ENCODE measurements at regions of chr2 and their contacts with region 1.

Region 1: DNA sequence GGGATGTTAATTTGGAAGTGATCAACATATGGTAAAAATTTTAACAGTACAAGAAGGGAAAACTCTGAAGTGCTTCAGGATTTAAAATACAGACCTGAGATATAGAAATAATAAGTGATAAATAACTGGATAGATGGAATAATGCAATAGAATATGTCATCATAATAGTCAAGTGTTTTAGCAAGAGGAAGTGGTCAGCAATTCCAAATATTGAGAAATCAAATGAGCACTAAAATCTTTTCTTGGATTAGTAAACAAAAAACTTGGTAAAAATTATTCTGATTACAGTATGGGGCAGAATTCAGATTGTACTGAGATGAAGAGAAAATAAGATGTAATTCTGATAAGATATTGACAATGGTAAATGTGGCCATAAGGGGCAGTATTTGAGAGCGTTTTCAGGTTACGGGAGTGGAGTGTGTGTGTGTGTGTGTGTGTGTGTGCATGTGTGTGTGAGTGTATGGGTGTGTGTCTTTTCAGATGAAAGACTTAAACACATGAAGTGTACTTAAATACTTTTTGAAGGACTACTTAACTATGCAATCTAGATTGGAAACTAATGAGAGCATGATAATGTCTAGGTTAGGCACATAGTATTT is 217.9 kb upstream of the ITGA4 start:
- DNase-seq: no peak
- H3K4me3 Mint-ChIP-seq: no peak overlapping the region
- H3K27ac Mint-ChIP-seq: no peak overlapping the region
- H3K4me1 Mint-ChIP-seq: peaks cover 76% of the 10 kb centered on the region
- H3K27me3 Mint-ChIP-seq: no peaks in the 10 kb centered on the region

Region 2: DNA sequence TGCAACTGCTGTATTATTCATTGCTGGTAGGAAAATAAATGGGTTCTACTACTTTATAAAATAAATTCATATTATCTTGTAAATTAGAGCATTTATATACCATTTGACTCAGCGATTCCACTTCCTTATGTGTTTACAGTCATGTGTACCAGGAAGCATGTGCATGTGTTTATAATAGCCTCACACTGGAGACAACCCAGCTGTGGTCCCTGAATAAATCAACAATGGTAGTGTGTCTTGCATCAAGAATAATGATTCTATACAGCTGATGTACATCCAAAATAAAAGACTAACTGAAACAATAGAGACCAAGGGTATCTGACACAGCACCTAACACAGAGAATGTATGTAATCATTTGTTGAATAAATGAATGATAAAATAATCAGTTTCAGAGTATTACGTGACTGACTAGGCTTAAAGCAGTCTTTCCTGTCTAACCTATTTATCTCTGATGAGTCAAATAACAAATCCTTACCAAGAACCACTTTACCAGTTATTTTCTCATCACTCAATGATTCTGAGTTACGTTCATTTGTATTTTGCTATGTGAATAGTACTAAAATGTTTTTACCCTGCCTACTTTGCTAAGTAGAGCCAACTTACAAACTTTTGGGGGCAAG is 42.0 kb before region 1 on chr2:
- intact Hi-C with region 1: loop called (anchors 5 kb)
- DNase-seq: no peak
- H3K4me3 Mint-ChIP-seq: peak overlapping the region; percentile 37
- H3K27ac Mint-ChIP-seq: peak overlapping the region; percentile 80
- H3K4me1 Mint-ChIP-seq: peaks cover 47% of the 10 kb centered on the region
- H3K27me3 Mint-ChIP-seq: no peaks in the 10 kb centered on the region

Region 3: GRCh38 chr2:181223234-181223633 is 16.1 kb before region 1 on chr2:
- intact Hi-C with region 1: loop called (anchors 2 kb)
- DNase-seq: no peak
- H3K4me3 Mint-ChIP-seq: peak overlapping the region; percentile 43
- H3K27ac Mint-ChIP-seq: peak overlapping the region; percentile 98
- H3K4me1 Mint-ChIP-seq: peaks cover 24% of the 10 kb centered on the region
- H3K27me3 Mint-ChIP-seq: no peaks in the 10 kb centered on the region

Region 4: DNA sequence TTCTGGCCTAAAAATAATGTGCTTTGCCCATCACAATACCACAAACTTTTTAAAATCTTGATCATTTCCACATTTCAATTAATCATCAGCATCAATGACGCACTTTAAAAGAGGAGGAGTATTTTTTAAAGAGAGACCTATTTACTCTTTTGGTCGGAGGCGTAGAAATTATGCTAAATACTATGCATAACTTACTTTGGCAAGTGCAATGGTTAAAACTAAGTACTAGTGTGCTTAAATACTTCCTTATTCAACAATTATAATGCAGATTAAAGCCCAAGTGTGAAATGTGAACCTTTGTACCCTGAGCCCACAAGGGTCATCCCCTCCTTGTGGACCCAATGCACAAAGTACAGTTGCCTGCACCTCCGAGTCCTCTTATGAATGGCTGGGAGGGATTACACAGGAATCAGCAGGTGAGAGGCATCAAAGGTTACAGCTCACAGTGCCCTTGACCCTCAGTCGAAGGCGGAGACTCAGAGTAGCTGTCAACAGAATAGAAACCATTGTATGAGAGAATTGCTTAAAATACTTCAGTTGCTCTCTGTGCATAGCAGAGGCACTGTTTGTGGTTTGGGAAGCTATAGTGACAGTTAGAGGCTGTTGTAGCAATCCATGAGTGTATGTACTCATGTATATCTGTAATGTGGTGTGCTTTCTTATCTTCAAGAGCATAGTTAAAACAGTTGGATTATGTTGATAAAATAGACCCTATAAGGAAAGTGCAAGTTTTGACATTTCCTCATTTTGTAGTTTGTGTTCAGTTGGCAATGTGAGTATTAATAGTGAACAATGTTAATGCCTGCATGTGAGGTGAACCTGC is 66.2 kb after region 1 on chr2:
- intact Hi-C with region 1: loop called (anchors 5 kb)
- DNase-seq: peak; percentile 70
- H3K4me3 Mint-ChIP-seq: peak overlapping the region; percentile 70
- H3K27ac Mint-ChIP-seq: peak overlapping the region; percentile 93
- H3K4me1 Mint-ChIP-seq: peaks cover 74% of the 10 kb centered on the region
- H3K27me3 Mint-ChIP-seq: no peaks in the 10 kb centered on the region

Region 5: GRCh38 chr2:181632733-181633401 is 393.6 kb after region 1 on chr2:
- intact Hi-C with region 1: no loop called
- DNase-seq: no peak
- H3K4me3 Mint-ChIP-seq: no peak overlapping the region
- H3K27ac Mint-ChIP-seq: no peak overlapping the region
- H3K4me1 Mint-ChIP-seq: no peaks in the 10 kb centered on the region
- H3K27me3 Mint-ChIP-seq: peaks cover 48% of the 10 kb centered on the region

Measured in activated T-helper 2 cell treated with anti-CD3 and anti-CD28 coated beads, Interferon-gamma antibody, Interleukin-2, Interleukin-4, amounts not matched to agents 10 μg/mL and 5 μg/mL and 100 μg/mL, durations not matched to agents 14 hours and 24 hours and 36 hours (primary cell).